ENCODE measurements at regions of chr11 and their contacts with region 1.

Region 1: GRCh38 chr11:33930317-33931021 is 38.6 kb upstream of the LMO2 start:
- DNase-seq: peak; percentile 100
- H3K4me3 ChIP-seq: peak overlapping the region; percentile 11
- H3K27ac ChIP-seq: peak overlapping the region; percentile 84
- H3K4me1 ChIP-seq: peaks cover 34% of the 10 kb centered on the region
- H3K27me3 ChIP-seq: no peaks in the 10 kb centered on the region
- CTCF ChIP-seq: no peak

Region 2: DNA sequence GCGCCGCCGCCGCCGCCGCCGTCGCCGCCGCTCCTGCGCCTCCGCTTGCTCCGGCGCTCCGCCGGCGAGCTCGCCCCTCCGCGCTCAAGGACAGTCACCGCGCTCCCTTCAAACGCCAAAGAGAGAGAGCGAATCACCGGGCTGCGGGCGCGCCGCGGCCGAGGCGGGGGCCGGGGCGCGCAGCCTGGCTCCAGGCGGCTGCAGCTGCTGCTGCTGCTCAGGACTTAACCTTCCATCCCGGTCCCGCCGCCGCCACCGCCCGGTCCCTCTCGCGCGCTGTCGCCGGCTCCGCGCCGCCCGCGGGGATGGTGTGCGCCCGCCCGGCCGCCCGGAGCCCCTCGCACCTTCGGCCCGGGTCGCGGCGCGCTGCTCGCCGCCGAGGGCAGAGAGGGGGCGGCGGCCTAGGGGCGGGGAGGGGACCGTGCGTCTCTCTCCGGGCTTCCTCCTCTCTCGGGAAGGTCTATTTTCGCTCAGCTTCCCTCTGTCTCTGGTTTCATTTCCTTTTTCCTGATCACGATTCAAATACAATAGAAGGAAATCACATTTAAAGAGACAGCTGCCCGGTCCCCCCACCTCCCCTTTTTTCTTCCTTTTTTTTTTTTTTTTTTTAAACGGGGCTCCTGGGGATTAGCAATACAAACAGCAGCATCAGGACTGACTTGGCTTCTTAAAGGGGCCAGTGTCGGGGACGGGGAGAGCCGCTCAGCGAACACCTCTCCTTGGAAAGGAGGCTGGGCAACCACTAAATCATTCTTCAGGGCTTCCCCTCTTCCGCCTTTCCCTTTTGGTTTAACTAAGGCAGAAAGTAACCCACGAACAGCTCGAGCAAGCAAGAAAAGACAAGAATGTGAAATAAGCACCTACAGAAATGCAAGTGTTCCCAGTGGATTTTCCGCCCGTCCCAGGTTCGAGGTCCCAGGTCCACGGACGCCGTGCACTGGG is 60.7 kb before region 1 on chr11:
- CTCF ChIA-PET with region 1: interaction called, 4 read pairs
- POLR2A ChIA-PET with region 1: no interaction called
- intact Hi-C with region 1: loop called (anchors 2 kb)
- DNase-seq: peak; percentile 88
- H3K4me3 ChIP-seq: peak overlapping the region; percentile 76
- H3K27ac ChIP-seq: peak overlapping the region; percentile 70
- H3K4me1 ChIP-seq: peaks cover 48% of the 10 kb centered on the region
- H3K27me3 ChIP-seq: no peaks in the 10 kb centered on the region
- CTCF ChIP-seq: no peak

Region 3: DNA sequence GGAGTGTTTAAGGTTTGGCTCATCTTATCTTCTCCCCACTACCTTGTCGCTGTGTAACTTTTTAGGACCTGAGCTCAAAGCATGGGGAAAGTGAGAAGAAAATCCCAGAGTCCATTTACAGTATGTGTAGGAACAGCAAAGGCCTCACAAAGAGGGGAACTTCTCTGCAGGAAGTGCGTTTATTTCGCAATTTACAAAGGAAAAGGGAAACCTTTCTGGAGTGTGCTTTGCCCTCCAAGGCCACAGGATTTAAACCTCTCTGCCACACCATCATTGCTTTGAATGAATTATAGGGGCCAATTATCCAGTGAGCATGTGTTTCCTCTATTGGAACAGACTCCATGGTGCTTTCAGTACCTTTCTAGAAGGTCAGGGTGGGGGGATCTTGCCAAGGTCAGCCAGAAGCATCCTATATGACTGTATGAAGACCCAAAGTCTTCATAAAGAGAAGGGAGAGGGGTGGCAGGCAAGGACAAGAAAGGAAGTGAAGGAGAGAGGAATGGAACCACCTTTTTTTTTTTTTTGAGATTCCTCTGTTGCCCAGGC is 29.5 kb after region 1 on chr11:
- CTCF ChIA-PET with region 1: no interaction called
- POLR2A ChIA-PET with region 1: no interaction called
- intact Hi-C with region 1: no loop called
- DNase-seq: no peak
- H3K4me3 ChIP-seq: no peak overlapping the region
- H3K27ac ChIP-seq: no peak overlapping the region
- H3K4me1 ChIP-seq: no peaks in the 10 kb centered on the region
- H3K27me3 ChIP-seq: no peaks in the 10 kb centered on the region
- CTCF ChIP-seq: no peak

Measured in A673 (cell line).